CD4-positive, alpha-beta T cell (primary cell): ENCODE measurements at regions of chr1 and their contacts with region 1.

Region 1: GRCh38 chr1:12143631-12144155 is 23.1 kb upstream of the TNFRSF1B start:
- DNase-seq: peak in 4 of 14 experiments; percentile 57 to 82 (median 69)
- ATAC-seq: peak; percentile 44
- H3K4me3 ChIP-seq: no peak overlapping the region
- H3K4me3 Mint-ChIP-seq: peak overlapping the region; percentile 50
- H3K27ac ChIP-seq: peak overlapping the region in 1 of 2 donors; percentile 45
- H3K27ac Mint-ChIP-seq: peak overlapping the region; percentile 54
- H3K4me1 ChIP-seq: peaks cover 72% of the 10 kb centered on the region
- H3K4me1 Mint-ChIP-seq: peaks cover 51% of the 10 kb centered on the region
- H3K27me3 ChIP-seq: no peaks in the 10 kb centered on the region
- H3K27me3 Mint-ChIP-seq: no peaks in the 10 kb centered on the region
- CTCF ChIP-seq: no peak

Region 2: GRCh38 chr1:11929849-11930248 is 213.8 kb before region 1 on chr1:
- CTCF ChIA-PET with region 1: no interaction called
- POLR2A ChIA-PET with region 1: no interaction called
- intact Hi-C with region 1: no loop called
- DNase-seq: no peak
- ATAC-seq: no peak
- H3K4me3 ChIP-seq: no peak overlapping the region
- H3K4me3 Mint-ChIP-seq: no peak overlapping the region
- H3K27ac ChIP-seq: no peak overlapping the region
- H3K27ac Mint-ChIP-seq: no peak overlapping the region
- H3K4me1 ChIP-seq: peaks cover 21% of the 10 kb centered on the region
- H3K4me1 Mint-ChIP-seq: peaks cover 10% of the 10 kb centered on the region
- H3K27me3 ChIP-seq: no peaks in the 10 kb centered on the region
- H3K27me3 Mint-ChIP-seq: no peaks in the 10 kb centered on the region
- CTCF ChIP-seq: no peak

Region 3: DNA sequence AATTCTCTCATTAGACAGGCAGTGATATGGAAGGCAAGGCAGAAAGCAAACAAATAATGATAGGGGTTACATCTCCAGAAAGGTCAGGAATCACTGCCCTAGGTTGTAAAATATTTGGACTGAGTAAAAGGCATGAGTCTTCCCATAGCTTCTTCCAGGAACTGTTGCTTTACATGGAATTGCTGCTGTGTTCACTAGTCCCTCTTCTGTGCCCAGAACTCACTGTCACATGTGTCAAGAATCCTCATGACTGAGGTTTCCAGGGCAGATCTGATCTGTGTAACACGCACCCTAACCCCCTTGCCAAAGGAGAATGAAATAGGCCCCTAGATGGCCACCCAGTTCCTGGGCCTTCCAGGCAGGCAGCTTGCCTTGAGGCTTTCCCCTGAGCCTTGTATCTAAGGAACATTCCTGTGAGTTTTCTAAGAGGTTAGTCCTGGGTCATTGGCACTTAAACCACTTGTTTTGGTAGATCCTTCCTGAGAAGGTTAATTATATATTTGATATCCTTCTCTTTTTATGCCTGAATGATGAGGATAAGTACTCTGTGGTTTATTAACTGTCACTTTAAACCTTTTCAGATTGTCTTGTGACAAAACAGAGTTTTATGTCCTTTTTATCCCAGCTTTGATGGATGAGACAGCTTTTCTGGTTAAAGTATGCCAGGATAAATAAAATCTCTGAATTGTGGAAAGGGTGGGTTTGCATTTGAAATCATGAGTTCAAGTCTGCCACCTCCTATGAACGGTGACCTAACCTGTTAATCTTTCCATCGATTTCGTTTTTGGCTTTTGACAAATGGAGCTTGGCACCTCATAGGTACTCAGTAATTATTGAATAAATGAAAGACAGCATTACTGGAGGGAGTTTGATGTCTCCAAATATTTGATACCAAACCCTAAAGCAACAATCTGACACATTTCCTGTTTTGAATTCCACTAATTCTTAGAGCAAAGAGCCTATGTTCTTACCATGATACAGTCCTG is 311.0 kb after region 1 on chr1:
- CTCF ChIA-PET with region 1: no interaction called
- POLR2A ChIA-PET with region 1: no interaction called
- intact Hi-C with region 1: loop called in 1 of 2 experiments (anchors 10 kb)
- DNase-seq: no peak
- ATAC-seq: no peak
- H3K4me3 ChIP-seq: no peak overlapping the region
- H3K4me3 Mint-ChIP-seq: peak overlapping the region; percentile 48
- H3K27ac ChIP-seq: no peak overlapping the region
- H3K27ac Mint-ChIP-seq: peak overlapping the region; percentile 86
- H3K4me1 ChIP-seq: peaks cover 75% of the 10 kb centered on the region
- H3K4me1 Mint-ChIP-seq: peaks cover 90% of the 10 kb centered on the region
- H3K27me3 ChIP-seq: no peaks in the 10 kb centered on the region
- H3K27me3 Mint-ChIP-seq: no peaks in the 10 kb centered on the region
- CTCF ChIP-seq: no peak